Body of pancreas (tissue), 4 donors: ENCODE measurements at regions of chr1 and their contacts with region 1.

Region 1: GRCh38 chr1:18299441-18300338 is 181.0 kb upstream of the KLHDC7A start:
- DNase-seq: peak; percentile 22 to 49 (median 29)
- ATAC-seq: no peak
- H3K4me3 ChIP-seq: no peak overlapping the region
- H3K27ac ChIP-seq: no peak overlapping the region
- H3K4me1 ChIP-seq: no peaks in the 10 kb centered on the region
- H3K27me3 ChIP-seq: no peaks in the 10 kb centered on the region
- CTCF ChIP-seq: peak; percentile 55 to 67 (median 60)
- POLR2A ChIP-seq: no peak

Region 2: DNA sequence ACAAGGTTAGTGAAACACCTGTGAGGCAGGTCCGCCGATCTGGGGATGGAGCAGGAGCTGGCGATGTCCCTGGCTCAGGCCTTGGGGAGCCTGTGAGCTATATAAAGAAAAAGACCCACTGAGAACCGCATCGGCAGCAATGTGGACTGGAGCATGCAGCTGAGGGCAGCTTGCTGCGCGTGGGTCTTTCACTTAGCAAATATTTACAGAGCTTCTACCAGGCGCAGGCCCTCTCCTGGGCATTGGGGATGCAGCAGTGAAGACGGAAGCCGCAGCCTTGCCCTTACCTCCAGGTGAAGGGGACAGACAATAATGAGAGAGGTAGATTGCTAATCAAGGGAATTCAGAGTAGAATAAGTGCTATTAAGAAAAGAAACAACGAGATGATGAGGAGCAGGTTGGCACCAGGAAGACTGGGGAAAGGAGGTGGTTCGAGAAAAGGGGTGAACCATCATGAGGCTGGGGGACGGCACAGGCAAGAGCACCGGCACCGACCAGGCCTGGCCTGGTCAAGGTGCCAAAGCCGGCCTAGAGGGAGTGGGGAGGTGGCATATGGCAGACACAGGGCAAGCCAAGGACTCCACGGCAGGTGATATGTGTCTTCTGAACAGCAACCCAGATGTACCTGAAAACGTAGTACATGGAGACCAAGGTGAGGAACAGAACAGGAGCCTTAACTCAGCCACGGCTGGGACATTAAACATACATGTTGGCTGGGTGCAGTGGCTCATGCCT is 270.3 kb after region 1 on chr1:
- intact Hi-C with region 1: loop called (anchors 5 kb)
- DNase-seq: peak in 2 of 4 donors; percentile 17 to 36
- ATAC-seq: no peak
- H3K4me3 ChIP-seq: no peak overlapping the region
- H3K27ac ChIP-seq: no peak overlapping the region
- H3K4me1 ChIP-seq: no peaks in the 10 kb centered on the region
- H3K27me3 ChIP-seq: no peaks in the 10 kb centered on the region
- CTCF ChIP-seq: no peak
- POLR2A ChIP-seq: no peak